Ovary (tissue), 10 donors: ENCODE measurements at regions of chr1 and their contacts with region 1.

Region 1: DNA sequence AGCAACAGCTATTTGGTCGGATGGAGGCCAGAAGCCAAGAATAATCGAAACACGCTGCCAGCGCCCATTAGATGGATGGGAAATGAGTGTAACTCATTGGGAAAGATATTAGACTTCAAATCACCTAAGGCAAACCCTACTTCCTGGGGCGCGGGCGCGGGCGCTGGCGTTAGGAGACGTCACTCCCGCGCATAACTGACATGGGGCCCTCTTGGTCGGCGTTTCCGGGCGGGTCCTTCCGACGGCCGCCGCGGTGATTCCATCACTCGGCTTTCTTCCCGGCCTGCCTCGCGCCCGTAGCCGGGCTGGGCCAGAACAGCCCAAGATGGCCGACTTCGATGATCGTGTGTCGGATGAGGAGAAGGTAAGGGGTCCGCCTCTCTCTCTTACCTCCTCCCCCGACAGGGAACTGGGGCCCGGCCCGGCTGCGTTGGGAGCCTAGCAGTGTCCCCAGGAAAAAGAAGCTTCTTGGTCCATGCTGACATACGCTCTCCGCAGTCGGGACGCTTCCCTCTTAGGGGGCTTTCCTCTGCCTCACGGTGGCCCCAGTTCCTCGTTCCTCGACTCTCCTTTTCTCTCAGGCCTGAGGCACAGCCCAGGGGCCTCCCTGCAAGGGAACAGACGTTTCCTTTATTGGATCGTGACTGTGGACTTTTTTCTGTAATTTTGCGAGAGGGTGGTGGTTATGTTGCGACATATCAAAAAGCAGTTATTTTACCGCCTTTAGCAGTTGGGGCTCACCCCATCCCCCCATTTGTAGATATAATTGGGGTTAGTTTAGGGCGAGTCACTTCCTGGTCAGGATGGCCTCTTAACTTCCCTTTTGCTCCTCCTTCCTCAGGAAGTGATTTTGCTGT is at the start of gene CAPZA1:
- DNase-seq: peak; percentile 89 to 93 (median 90)
- H3K4me3 ChIP-seq: peak within 1 kb of the TSS; percentile 95
- H3K27ac ChIP-seq: peak within 1 kb of the TSS; percentile 91 to 93
- H3K4me1 ChIP-seq: peaks cover 3% of the 10 kb centered on the region
- H3K27me3 ChIP-seq: no peaks in the 10 kb centered on the region
- CTCF ChIP-seq: no peak
- EP300 ChIP-seq: no peak
- POLR2A ChIP-seq: peak; percentile 88
- total RNA-seq, gene CAPZA1: 54.0 to 81.2 (median 66.9) TPM

Region 2: DNA sequence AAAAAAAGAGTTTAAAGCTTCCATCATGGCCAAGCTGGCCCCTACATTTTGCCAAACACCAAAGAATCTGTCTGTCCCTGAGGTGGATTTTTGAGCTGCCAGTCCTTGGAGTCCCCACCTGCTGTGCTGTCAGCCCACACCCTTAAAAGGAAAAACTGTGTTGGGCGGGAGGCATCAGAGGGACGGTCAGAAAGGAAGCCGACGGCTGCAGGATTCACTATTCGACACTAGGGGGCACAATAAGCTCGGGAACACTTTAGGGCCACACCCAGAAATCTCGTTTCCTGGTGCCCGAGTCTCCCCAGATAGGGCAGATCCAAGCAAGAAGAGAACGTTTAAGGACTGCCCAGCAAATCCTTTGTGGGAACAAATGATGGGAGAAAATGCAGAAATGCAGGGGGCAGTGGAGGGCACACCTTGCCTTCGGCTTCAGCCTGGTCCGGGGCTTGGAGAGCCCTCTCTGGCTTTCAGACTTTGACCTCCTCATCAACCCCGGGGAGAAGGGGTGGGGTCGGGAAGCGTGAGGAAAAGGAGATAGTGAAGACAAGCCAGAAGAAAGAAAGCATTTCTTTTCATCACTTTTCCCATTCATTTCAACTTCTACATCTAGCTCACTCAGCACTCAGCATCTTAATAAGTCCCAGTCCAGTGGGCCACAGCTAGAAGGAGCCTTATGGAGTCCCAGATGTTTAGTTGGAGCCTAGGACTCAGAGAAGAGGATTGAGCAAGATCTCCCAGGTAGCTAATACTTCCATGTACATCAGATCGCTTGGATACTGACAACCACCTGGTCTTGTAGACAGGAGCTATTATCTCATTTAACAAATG is 228.8 kb before region 1 on chr1:
- intact Hi-C with region 1: loop called in 2 of 4 experiments (anchors 10 kb)
- DNase-seq: peak; percentile 85 to 94 (median 88)
- H3K4me3 ChIP-seq: peak overlapping the region; percentile 35
- H3K27ac ChIP-seq: peak overlapping the region in 1 of 2 donors; percentile 15
- H3K4me1 ChIP-seq: peaks cover 2% of the 10 kb centered on the region
- H3K27me3 ChIP-seq: no peaks in the 10 kb centered on the region
- CTCF ChIP-seq: peak; percentile 63 to 92 (median 85)
- EP300 ChIP-seq: no peak
- POLR2A ChIP-seq: no peak

Region 3: GRCh38 chr1:112501810-112502641 is 117.7 kb before region 1 on chr1:
- intact Hi-C with region 1: loop called in 3 of 4 experiments (anchors 5 to 10 kb)
- DNase-seq: peak; percentile 84 to 91 (median 86)
- H3K4me3 ChIP-seq: peak overlapping the region; percentile 51
- H3K27ac ChIP-seq: peak overlapping the region in 1 of 2 donors; percentile 18
- H3K4me1 ChIP-seq: peaks cover 36% of the 10 kb centered on the region
- H3K27me3 ChIP-seq: no peaks in the 10 kb centered on the region
- CTCF ChIP-seq: peak; percentile 60 to 73 (median 73)
- EP300 ChIP-seq: no peak
- POLR2A ChIP-seq: no peak

Region 4: DNA sequence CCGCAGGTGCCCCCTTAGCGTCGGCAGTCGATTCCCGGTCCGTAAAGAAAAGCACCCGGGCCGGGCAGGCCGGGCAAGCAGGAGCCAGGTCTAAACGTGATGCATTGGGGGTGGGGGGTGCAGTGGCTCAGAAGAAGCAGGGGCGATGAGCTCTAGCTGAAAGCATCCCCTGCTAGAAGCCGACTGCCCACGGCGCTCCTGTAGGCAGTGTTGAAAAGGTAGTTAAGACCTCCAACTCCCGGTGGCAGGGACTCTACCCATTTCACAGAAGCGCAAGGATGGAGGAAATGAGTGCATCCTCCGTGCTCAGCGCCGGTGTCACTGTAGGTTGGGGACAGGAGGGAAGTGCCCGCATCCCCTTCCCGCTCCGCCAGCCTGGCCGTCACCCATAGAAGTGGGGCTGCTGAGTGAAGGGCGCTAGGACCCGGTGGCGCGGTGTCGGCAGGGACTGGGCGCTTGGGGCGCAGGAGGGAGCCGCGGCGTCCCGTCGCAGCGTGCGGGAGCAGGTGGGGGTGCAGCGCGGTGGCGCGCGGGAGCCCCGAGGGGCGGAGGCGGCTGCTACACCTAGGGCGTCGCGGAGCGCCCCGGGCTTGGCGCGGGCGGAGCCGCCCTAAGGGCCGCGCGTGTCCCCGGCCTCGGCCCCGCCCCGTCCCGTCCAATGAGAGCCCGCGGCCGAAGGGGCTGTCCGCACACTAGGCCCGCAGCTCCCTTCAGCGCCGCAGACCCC is 111.3 kb before region 1 on chr1 and contains the start of gene WNT2B:
- intact Hi-C with region 1: loop called in 3 of 4 experiments (anchors 5 to 10 kb)
- DNase-seq: peak; percentile 47 to 71 (median 63)
- H3K4me3 ChIP-seq: peak within 1 kb of the TSS; percentile 51
- H3K27ac ChIP-seq: peak within 1 kb of the TSS; percentile 46 to 79
- H3K4me1 ChIP-seq: peaks cover 34% of the 10 kb centered on the region
- H3K27me3 ChIP-seq: no peaks in the 10 kb centered on the region
- CTCF ChIP-seq: peak in 1 of 3 donors; percentile 19
- EP300 ChIP-seq: no peak
- POLR2A ChIP-seq: no peak
- total RNA-seq, gene WNT2B: 13.8 to 57.3 (median 45.1) TPM

Region 5: GRCh38 chr1:112674439-112674985 is 54.8 kb after region 1 on chr1 and contains the start of gene MOV10:
- intact Hi-C with region 1: loop called in 1 of 4 experiments (anchors 2 kb)
- DNase-seq: peak; percentile 70 to 82 (median 75)
- H3K4me3 ChIP-seq: peak within 1 kb of the TSS; percentile 63
- H3K27ac ChIP-seq: peak within 1 kb of the TSS; percentile 90 to 96
- H3K4me1 ChIP-seq: peaks cover 4% of the 10 kb centered on the region
- H3K27me3 ChIP-seq: no peaks in the 10 kb centered on the region
- CTCF ChIP-seq: no peak
- EP300 ChIP-seq: no peak
- POLR2A ChIP-seq: no peak
- total RNA-seq, gene MOV10: 31.7 to 66.3 (median 53.5) TPM

Region 6: DNA sequence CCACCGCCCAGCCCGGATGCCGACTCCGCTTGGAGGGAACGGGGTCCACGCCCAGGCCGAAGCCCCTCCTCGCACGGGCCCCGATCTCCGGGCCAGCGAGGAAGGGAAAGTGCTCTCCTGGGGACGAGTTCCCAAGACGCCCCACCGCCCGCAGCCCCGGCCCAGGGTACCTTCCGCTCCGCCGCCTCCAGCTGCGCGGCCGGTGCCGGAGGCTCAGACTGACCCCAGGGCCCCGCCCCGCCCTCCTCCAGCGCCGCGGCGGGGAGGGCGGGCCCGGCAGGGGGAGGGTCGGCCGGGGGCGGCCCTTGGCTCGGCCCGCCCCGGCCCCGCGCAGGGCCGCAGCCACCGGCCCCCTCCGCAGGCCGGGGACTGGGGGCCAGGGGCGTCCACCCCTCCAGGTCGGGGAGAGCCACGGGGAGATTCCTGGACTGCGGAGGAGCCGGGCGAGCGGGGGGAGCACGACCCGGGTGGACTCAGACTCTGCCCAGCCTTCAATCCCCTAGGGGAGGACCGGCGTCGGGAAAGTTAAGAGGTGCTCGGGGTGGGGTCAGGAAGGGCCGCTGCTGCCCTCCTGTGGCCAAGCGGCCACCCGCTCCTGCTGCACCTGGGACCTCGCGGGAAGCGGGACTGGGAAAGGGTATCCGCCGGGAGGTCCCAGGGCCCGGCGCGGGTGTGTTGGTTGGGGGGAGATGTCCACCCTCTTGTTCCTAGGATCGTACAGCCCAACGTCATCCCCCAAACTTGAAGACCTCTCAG is 87.3 kb after region 1 on chr1 and contains the start of gene RHOC:
- intact Hi-C with region 1: loop called (anchors 2 to 10 kb)
- DNase-seq: peak; percentile 91 to 93 (median 92)
- H3K4me3 ChIP-seq: peak within 1 kb of the TSS; percentile 67
- H3K27ac ChIP-seq: peak within 1 kb of the TSS; percentile 85 to 92
- H3K4me1 ChIP-seq: peaks cover 7% of the 10 kb centered on the region
- H3K27me3 ChIP-seq: no peaks in the 10 kb centered on the region
- CTCF ChIP-seq: peak; percentile 89 to 94 (median 91)
- EP300 ChIP-seq: no peak
- POLR2A ChIP-seq: peak; percentile 65
- total RNA-seq, gene RHOC: 177 to 276 (median 208) TPM